GM10248 (cell line): ENCODE measurements at regions of chr19 and their contacts with region 1.

Region 1: GRCh38 chr19:19554074-19555023 is 16.3 kb downstream of the CILP2 start:
- DNase-seq: peak; percentile 85
- CTCF ChIP-seq: peak; percentile 68

Region 2: DNA sequence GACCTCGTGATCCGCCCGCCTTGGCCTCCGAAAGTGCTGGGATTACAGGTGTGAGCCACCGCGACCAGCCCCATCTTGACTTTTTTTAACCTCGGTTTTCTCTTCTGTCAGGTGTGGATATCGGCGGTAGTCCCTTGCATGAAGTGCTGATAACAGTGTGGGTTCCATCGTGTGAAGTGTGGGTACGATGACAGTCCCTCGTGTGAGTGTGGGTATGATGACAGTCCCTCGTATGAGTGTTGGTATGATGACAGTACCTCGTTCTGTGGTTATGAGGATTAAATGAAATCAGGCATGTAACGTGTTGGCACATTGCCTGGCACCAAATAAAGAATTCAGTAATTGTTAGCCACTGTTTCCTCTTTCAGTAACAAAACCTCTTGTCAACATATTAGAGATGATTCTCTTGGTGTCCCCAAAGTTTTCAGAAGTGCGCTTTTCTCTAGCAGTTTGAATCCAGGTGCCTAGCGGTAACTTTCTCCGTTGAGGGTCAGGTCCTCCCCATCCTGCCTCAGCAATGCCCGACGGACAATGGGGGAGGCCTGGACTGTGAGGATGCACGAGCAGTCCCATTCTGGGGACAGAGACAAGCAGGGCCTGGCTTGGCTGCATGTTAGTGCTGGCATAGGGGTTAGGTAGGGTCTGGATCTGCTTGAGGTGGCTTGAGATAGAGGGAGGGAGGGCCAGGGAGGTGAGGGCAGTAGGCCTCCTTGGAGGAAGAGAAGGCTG is 133.6 kb before region 1 on chr19:
- CTCF ChIA-PET with region 1: no interaction called
- POLR2A ChIA-PET with region 1: no interaction called
- DNase-seq: no peak
- CTCF ChIP-seq: no peak

Region 3: DNA sequence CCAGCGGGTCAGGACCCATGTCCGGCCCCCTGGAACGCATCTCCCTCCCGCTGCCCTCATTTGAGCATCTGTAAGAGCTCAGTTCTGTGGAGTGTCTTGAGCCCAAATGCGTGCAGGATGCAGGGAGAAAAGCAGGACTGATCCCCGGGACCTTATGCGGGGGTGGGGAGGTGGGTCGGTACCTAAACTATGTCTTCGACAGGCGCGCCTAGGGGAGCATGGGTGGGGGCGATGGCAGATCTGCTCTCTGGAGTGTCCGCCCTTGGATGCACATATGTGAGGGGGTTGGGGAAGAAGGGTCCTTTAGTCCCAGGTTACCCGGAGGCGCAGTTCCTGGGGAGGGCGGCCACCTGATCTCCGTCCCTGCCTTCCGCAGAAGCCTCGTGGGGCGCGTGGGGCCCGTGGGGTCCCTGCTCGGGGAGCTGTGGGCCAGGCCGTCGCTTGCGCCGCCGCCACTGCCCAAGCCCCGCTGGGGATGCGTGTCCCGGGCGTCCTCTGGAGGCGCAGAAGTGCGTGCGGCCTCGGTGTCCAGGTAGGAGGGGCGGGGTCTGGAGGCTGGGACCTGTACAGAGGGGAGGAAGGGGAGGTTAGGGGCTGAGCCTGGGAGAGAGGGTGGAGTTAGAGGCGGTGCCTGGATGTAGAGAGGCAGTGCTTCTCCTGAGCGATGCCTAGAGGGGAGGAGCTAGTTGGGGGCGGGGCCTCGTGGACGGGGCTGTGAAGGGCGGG is 13.5 kb before region 1 on chr19:
- CTCF ChIA-PET with region 1: interaction called, 251 read pairs
- POLR2A ChIA-PET with region 1: no interaction called
- DNase-seq: peak; percentile 88
- CTCF ChIP-seq: no peak

Region 4: DNA sequence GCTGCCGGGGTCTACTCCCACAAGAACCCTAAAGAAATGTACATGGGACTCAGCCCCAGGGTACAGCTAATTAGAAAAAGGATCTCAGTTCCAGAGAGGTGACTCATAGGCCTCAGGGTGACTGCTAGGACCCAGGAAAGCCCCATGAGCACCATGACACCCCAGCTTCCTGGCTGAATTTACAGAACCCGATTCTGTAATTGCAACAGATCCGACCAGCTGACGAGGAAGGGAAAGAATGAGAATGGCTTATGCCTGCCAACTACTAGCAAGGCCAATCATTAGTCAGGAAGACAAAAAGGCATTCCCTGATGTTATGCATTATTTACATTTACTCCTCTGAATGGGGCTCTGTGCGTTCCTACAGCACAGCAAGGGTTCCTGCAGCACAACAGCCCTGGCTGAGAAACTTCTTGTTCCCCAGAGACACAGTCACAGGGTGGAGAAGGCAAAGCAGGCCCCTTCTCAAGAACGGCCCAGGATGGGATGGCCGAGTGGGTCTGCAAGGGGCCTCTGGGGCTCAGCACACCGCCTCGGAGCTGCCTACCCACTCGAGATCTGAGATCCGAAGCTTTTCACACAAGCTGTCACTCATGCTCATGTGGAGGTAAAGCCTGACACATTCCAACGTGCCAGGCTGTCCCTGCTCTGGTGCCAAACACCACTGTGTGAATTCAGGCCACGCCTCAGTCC is 36.9 kb after region 1 on chr19:
- CTCF ChIA-PET with region 1: interaction called, 11 read pairs
- POLR2A ChIA-PET with region 1: no interaction called
- DNase-seq: peak; percentile 82
- CTCF ChIP-seq: no peak

Region 5: DNA sequence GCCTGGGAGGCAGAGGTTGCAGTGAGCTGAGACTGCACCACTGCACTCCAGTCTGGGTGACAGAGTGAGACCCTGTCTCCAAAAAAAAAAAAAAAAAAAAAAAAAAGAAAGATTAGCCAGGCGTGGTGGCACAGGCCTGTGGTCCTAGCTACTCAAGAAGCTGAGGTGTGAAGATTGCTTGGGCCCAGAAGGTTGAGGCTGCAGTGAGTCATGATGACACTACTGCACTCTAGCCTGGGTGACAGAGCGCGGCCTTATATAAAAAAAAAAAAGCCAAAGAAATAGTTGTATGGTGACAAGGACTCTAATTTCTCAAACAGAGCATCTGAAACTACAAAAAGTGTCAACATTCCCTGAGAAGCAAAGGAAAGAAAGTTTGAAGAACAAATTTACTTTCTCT is 60.7 kb after region 1 on chr19:
- CTCF ChIA-PET with region 1: interaction called, 22 read pairs
- POLR2A ChIA-PET with region 1: interaction called, 4 read pairs
- DNase-seq: no peak
- CTCF ChIP-seq: no peak